ENCODE measurements at regions of chr9 and their contacts with region 1.

Region 1: DNA sequence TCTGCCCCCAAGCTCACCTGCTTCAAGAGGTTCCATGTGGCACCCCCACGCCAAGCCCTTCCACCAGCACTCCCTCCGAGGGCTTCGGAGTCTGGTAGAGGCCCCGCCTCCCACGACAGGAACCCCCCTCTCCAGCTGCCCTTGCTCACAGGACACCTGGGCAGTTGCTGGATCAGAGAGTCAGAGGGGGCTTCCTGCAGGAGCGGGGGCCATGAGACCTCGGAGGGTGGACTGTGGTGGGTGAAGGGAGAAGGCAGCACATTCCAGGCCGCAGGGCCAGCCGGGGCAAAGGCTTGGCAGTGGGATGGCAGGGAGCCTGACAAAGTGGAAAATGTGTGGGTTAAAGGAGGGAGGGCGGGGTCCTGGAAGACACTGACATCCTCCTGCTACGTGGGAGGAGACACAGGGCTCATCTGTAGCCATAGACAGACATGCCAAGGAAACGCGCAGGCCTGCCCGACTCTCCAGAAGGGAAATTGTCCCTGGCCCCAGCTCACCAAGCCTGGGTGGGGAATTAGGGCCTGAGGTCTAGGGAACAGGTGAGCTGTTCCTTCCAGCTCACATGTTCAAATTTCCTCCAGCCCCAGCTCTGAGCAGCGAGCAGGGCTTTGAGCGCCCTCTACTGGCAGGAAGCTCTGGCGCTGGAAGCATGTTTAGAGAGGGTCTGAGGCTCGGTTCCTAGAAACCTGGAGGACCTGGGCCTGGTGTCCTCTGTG is 74.2 kb downstream of the NTNG2 start:
- DNase-seq: peak; percentile 70
- H3K4me3 Mint-ChIP-seq: no peak overlapping the region
- H3K27ac Mint-ChIP-seq: no peak overlapping the region
- H3K4me1 Mint-ChIP-seq: no peaks in the 10 kb centered on the region
- H3K27me3 Mint-ChIP-seq: peaks cover 9% of the 10 kb centered on the region
- CTCF ChIP-seq: peak; percentile 97

Region 2: DNA sequence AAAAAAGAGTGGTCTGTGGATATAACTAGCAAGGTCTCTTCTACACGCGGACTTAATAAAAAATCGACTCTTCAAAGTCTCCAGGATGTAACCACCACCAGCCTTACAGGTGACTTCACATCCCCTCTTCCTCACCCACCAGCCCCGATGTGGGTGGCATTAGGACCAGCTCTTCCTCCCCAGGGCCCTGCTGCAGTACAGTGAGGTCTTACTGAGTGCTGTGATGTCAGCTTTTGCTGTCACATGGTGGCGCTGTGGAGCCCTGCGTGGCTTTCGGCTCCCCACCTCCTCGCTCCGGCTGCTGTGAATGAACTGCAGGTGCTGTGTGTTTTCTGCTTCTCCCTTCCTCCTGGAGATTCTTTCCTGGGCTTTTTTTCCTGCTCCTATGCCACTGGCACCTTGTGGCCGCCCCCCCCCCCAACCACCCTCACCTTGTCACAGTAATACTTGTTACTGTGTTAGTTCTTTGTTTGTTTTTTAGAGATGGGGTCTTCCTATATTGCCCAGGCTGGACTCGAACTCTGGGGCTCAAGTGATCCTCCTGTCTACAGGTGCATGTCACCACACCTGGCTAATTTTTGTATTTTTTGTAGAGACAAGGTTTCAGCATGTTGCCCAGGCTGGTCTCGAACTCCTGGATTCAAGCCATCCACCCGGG is 480.4 kb before region 1 on chr9:
- CTCF ChIA-PET with region 1: interaction called, 114 read pairs
- POLR2A ChIA-PET with region 1: no interaction called
- intact Hi-C with region 1: no loop called
- DNase-seq: peak; percentile 79
- H3K4me3 Mint-ChIP-seq: no peak overlapping the region
- H3K27ac Mint-ChIP-seq: no peak overlapping the region
- H3K4me1 Mint-ChIP-seq: no peaks in the 10 kb centered on the region
- H3K27me3 Mint-ChIP-seq: peaks cover 27% of the 10 kb centered on the region
- CTCF ChIP-seq: peak; percentile 87

Region 3: GRCh38 chr9:131762356-131762932 is 473.7 kb before region 1 on chr9:
- CTCF ChIA-PET with region 1: interaction called, 114 read pairs
- POLR2A ChIA-PET with region 1: interaction called, 6 read pairs
- intact Hi-C with region 1: loop called (anchors 1 kb)
- DNase-seq: peak; percentile 58
- H3K4me3 Mint-ChIP-seq: no peak overlapping the region
- H3K27ac Mint-ChIP-seq: no peak overlapping the region
- H3K4me1 Mint-ChIP-seq: no peaks in the 10 kb centered on the region
- H3K27me3 Mint-ChIP-seq: peaks cover 51% of the 10 kb centered on the region
- CTCF ChIP-seq: peak; percentile 95

Region 4: GRCh38 chr9:131769356-131769755 is 466.7 kb before region 1 on chr9:
- CTCF ChIA-PET with region 1: interaction called, 114 read pairs
- POLR2A ChIA-PET with region 1: no interaction called
- intact Hi-C with region 1: no loop called
- DNase-seq: no peak
- H3K4me3 Mint-ChIP-seq: no peak overlapping the region
- H3K27ac Mint-ChIP-seq: no peak overlapping the region
- H3K4me1 Mint-ChIP-seq: no peaks in the 10 kb centered on the region
- H3K27me3 Mint-ChIP-seq: peaks cover 66% of the 10 kb centered on the region
- CTCF ChIP-seq: no peak

Region 5: GRCh38 chr9:131809941-131810344 is 426.2 kb before region 1 on chr9:
- CTCF ChIA-PET with region 1: interaction called, 3 read pairs
- POLR2A ChIA-PET with region 1: no interaction called
- intact Hi-C with region 1: loop called (anchors 5 kb)
- DNase-seq: no peak
- H3K4me3 Mint-ChIP-seq: no peak overlapping the region
- H3K27ac Mint-ChIP-seq: no peak overlapping the region
- H3K4me1 Mint-ChIP-seq: no peaks in the 10 kb centered on the region
- H3K27me3 Mint-ChIP-seq: peaks cover 46% of the 10 kb centered on the region
- CTCF ChIP-seq: no peak

Region 6: GRCh38 chr9:132169672-132170392 is 66.3 kb before region 1 on chr9:
- CTCF ChIA-PET with region 1: interaction called, 17 read pairs
- POLR2A ChIA-PET with region 1: no interaction called
- intact Hi-C with region 1: loop called (anchors 1 kb)
- DNase-seq: peak; percentile 60
- H3K4me3 Mint-ChIP-seq: no peak overlapping the region
- H3K27ac Mint-ChIP-seq: no peak overlapping the region
- H3K4me1 Mint-ChIP-seq: no peaks in the 10 kb centered on the region
- H3K27me3 Mint-ChIP-seq: peaks cover 91% of the 10 kb centered on the region
- CTCF ChIP-seq: peak; percentile 90

Region 7: GRCh38 chr9:132249123-132249522 is 13.0 kb after region 1 on chr9:
- CTCF ChIA-PET with region 1: interaction called, 15 read pairs
- POLR2A ChIA-PET with region 1: no interaction called
- intact Hi-C with region 1: no loop called
- DNase-seq: peak; percentile 36
- H3K4me3 Mint-ChIP-seq: no peak overlapping the region
- H3K27ac Mint-ChIP-seq: no peak overlapping the region
- H3K4me1 Mint-ChIP-seq: no peaks in the 10 kb centered on the region
- H3K27me3 Mint-ChIP-seq: peaks cover 2% of the 10 kb centered on the region
- CTCF ChIP-seq: no peak

Region 8: GRCh38 chr9:132424857-132425686 is 189.0 kb after region 1 on chr9:
- CTCF ChIA-PET with region 1: no interaction called
- POLR2A ChIA-PET with region 1: no interaction called
- intact Hi-C with region 1: no loop called
- DNase-seq: no peak
- H3K4me3 Mint-ChIP-seq: no peak overlapping the region
- H3K27ac Mint-ChIP-seq: no peak overlapping the region
- H3K4me1 Mint-ChIP-seq: no peaks in the 10 kb centered on the region
- H3K27me3 Mint-ChIP-seq: peaks cover 77% of the 10 kb centered on the region
- CTCF ChIP-seq: no peak